ENCODE measurements at regions of chr2 and their contacts with region 1.

Region 1: GRCh38 chr2:72892506-72893173 is 5.4 kb downstream of the SPR start:
- DNase-seq: no peak
- ATAC-seq: peak; percentile 90
- H3K4me3 ChIP-seq: no peak overlapping the region
- H3K27ac ChIP-seq: no peak overlapping the region
- H3K4me1 ChIP-seq: peaks cover 12% of the 10 kb centered on the region
- H3K27me3 ChIP-seq: no peaks in the 10 kb centered on the region
- CTCF ChIP-seq: peak; percentile 91

Region 2: DNA sequence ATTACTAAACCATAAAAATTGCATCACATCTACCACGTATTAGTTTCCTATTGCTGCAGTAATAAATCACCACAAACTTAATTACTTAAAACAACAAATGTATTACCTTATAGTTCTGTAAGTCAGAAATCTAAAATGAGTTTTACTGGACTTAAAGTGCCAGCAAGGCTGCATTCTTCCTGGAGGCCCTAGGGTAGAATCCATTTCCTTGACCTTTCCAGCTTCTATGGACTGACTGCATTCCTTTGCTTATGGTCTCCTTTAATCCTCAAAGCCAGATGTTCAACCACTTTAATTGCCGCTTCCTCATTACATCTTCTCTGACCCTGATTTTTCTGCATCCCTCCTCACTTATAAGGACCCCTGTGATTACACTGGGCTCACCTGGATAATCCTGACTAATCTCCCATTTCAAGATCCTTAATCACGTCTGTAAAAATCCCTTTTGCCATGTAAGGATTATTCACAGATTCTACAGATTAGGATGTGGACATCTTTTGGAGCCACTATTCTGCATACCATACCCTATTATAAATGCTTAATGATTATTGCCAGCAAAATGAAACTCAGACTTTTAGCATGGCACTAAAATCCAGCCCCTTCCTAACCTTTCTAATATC is 44.8 kb before region 1 on chr2:
- CTCF ChIA-PET with region 1: no interaction called
- POLR2A ChIA-PET with region 1: interaction called, 13 read pairs
- in situ Hi-C with region 1: no loop called
- intact Hi-C with region 1: no loop called
- DNase-seq: no peak
- ATAC-seq: no peak
- H3K4me3 ChIP-seq: no peak overlapping the region
- H3K27ac ChIP-seq: no peak overlapping the region
- H3K4me1 ChIP-seq: no peaks in the 10 kb centered on the region
- H3K27me3 ChIP-seq: peaks cover 3% of the 10 kb centered on the region; the same call in 1 of the 2 replicates
- CTCF ChIP-seq: no peak

Region 3: DNA sequence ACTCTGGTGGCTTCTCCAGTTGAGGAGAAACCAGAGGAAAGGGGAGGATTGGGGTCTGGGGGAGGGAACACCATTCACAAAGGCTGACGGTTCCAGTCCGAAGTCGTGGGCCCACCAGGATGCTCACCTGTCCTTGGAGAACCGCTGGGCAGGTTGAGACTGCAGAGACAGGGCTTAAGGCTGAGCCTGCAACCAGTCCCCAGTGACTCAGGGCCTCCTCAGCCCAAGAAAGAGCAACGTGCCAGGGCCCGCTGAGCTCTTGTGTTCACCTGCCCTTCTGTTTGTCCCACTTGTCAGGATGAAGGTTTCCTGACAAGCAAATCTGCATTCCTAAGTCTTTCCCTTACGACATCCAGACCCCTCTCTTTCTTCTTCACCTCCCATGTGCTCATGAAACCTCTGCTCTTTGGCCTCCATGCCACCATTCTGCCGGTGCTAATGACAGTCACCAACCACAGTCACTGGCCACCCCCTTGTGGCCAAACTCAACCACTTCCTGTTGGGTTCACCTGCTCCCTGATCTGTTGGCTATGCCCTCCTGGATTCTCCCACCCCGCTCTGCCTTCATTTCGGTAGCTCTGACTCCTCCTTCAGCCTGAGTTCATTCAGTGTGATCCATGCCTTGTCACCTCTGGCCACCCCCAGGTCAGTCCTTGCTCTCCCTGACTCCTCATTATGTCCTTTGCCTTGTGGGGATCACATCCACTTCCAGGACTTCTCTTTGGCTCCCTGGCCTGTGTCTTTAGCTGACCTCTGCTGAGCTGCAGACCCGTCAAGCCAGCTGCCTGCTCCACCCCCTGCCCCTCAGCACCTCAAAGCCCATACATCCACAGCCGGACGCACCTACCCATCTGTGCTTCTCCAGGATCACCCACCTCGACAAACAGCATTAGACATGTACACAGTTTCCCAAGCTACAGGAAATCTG is 42.3 kb after region 1 on chr2:
- CTCF ChIA-PET with region 1: interaction called, 20 read pairs
- POLR2A ChIA-PET with region 1: no interaction called
- in situ Hi-C with region 1: no loop called
- intact Hi-C with region 1: loop called (anchors 1 kb)
- DNase-seq: no peak
- ATAC-seq: peak; percentile 59; the same call in 1 of the 2 replicates
- H3K4me3 ChIP-seq: no peak overlapping the region
- H3K27ac ChIP-seq: no peak overlapping the region
- H3K4me1 ChIP-seq: no peaks in the 10 kb centered on the region
- H3K27me3 ChIP-seq: no peaks in the 10 kb centered on the region
- CTCF ChIP-seq: no peak

Region 4: GRCh38 chr2:72973566-72974435 is 81.2 kb after region 1 on chr2:
- CTCF ChIA-PET with region 1: interaction called, 30 read pairs
- POLR2A ChIA-PET with region 1: no interaction called
- in situ Hi-C with region 1: no loop called
- intact Hi-C with region 1: no loop called
- DNase-seq: peak; percentile 46
- ATAC-seq: peak; percentile 92
- H3K4me3 ChIP-seq: no peak overlapping the region
- H3K27ac ChIP-seq: no peak overlapping the region
- H3K4me1 ChIP-seq: no peaks in the 10 kb centered on the region
- H3K27me3 ChIP-seq: no peaks in the 10 kb centered on the region
- CTCF ChIP-seq: peak; percentile 93

Measured in Panc1 (cell line).